Dendritic cell treated with granulocyte-macrophage colony-stimulating factor and Interleukin-4, amounts not matched to agents 40 ng/mL and 50 ng/mL, for 4 days (primary cell): ENCODE measurements at regions of chr7 and their contacts with region 1.

Region 1: GRCh38 chr7:74417419-74417971 is 36.2 kb upstream of the GTF2IRD1 start:
- H3K4me3 Mint-ChIP-seq: no peak overlapping the region
- H3K27ac Mint-ChIP-seq: no peak overlapping the region
- H3K4me1 Mint-ChIP-seq: no peaks in the 10 kb centered on the region
- H3K27me3 Mint-ChIP-seq: peaks cover 1% of the 10 kb centered on the region

Region 2: DNA sequence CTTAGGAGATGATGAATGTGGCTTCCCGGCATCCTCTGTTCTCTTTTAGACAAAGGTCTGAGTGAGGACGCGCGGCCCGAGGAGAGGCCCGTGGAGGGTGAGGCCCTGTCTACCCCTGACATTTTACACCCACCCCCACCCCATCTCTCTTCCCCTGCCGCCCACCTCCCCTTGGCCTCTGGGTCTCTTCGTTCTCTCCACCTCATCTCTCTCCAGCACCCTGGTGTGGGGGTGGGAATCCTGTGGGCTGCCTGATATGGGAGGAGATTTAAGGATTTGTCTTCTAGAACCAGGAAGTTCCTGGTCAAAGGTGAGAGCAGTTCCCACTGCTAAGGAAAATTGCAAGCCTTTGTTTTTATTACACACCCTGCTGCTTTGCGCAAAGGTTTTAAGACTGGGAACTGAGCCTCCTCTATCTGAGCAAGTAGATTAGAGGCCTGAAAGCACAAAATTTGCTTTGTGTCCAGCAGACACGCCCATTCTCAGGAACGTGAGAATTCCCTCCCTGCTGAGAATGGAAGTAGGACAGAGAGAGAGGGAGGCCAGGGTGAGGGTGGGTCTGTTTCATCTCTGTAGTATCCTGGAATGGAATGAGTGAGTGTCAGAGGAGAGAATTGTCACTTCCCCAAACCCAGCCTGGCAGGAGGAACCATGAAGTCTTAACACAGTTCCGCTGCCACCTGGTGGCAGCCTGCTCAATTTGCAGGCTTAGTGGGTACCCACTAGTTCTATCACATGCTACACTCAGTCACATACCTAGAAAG is 127.4 kb after region 1 on chr7:
- intact Hi-C with region 1: loop called (anchors 2 kb)
- H3K4me3 Mint-ChIP-seq: no peak overlapping the region
- H3K27ac Mint-ChIP-seq: no peak overlapping the region
- H3K4me1 Mint-ChIP-seq: peaks cover 6% of the 10 kb centered on the region
- H3K27me3 Mint-ChIP-seq: no peaks in the 10 kb centered on the region

Region 3: DNA sequence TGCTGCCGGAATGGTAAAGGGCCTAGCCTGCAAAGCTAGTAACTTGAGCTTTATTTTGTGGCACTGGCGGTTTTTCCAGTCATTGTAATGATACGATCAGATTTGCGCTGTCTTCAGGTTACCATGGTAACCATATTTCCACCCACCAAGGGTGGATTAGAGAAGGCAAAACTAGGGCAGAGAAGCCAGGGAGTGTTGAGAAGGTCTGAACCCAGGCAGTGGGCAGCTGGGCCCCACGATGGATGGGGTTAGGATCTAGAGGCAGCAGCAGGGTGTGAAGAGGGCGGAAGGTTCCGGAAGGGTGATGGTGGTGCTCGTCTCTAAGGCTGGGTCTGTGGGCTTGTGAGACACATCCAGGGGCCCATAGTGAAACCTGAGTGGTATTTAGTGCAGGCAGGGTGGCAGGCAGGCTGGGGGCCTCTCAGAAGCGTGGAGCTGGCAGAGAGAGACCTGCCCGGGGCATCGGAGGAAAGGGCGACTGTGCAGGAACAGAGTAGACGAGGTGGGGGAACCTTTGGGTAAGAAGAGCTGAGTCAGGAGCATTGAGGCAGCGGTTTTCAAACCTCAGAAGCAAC is 152.1 kb after region 1 on chr7:
- intact Hi-C with region 1: loop called (anchors 1 kb)
- H3K4me3 Mint-ChIP-seq: no peak overlapping the region
- H3K27ac Mint-ChIP-seq: no peak overlapping the region
- H3K4me1 Mint-ChIP-seq: peaks cover 12% of the 10 kb centered on the region
- H3K27me3 Mint-ChIP-seq: peaks cover 15% of the 10 kb centered on the region

Region 4: DNA sequence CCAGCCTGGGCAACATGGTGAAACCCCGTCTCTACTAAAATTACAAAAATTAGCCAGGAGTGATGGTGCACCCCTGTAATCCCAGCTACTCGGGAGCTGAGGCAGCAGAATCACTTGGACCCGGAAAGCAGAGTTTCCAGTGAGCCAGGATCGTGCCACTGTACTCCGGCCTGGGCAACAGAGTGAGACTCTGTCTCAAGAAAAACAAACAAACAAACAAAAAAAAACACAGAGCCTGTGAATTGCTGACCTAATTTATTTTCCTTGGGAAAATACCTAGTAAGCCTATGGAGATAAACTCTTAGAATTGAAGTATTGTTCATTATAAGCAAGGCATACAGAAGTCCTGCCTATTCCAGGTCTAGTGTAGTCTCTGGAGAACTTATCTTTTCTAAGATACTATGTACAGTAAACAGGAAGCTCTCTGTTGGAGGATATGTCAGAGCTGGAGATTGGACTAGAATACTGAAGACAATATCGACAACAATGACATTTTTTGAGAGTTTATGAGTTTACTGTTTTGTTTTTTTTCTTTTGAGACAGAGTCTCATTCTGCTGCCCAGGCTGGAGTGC is 254.9 kb after region 1 on chr7:
- intact Hi-C with region 1: no loop called
- H3K4me3 Mint-ChIP-seq: no peak overlapping the region
- H3K27ac Mint-ChIP-seq: no peak overlapping the region
- H3K4me1 Mint-ChIP-seq: peaks cover 6% of the 10 kb centered on the region
- H3K27me3 Mint-ChIP-seq: no peaks in the 10 kb centered on the region

Region 5: GRCh38 chr7:75048435-75049379 is 631.2 kb after region 1 on chr7:
- intact Hi-C with region 1: loop called (anchors 5 kb)
- H3K4me3 Mint-ChIP-seq: no peak overlapping the region
- H3K27ac Mint-ChIP-seq: peak overlapping the region; percentile 23
- H3K4me1 Mint-ChIP-seq: no peaks in the 10 kb centered on the region
- H3K27me3 Mint-ChIP-seq: no peaks in the 10 kb centered on the region